ENCODE measurements at regions of chr18 and their contacts with region 1.

Region 1: DNA sequence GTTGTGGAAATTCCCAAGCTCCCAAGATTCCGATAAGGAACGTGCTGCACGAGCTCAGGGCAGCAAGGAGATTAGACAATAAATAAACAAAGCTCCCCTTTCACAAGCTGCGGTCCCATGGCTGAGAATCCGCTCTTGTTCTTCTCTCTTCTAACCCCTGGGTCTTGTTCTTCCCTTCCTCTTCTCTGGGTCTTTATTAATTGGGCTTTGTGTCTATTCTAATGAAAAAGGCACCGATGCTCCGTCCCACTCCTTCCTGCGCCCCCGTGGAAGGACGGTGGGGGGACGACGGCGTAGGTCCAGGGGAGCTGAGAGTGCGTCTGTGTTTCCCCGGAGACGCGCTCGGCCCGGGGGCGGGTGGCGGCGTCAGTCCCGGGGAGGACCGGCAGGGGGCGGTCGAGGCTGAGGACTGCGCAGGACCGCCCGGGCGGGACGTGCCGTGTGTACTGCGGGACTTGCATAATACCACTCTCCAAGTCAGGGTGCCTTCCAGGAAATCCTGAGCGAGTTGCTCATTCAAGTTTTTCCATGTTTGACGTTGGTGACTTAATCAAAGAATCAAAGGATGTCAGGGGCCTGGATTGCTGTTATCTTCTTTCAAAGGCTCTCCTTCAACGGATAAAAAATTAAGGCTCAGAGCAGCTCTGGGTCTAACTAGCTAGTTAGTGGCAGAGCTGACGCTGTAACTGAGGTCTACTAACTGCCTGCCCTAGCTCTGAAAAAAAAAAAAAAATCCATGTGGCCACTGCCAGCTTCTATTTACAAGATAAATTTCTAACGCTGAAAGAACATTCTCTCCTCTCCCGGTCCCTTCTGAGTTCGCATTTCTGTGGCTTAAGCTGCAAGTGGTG is 321.4 kb downstream of the TGIF1 start:
- DNase-seq: peak; percentile 78 to 85
- ATAC-seq: peak; percentile 99

Region 2: DNA sequence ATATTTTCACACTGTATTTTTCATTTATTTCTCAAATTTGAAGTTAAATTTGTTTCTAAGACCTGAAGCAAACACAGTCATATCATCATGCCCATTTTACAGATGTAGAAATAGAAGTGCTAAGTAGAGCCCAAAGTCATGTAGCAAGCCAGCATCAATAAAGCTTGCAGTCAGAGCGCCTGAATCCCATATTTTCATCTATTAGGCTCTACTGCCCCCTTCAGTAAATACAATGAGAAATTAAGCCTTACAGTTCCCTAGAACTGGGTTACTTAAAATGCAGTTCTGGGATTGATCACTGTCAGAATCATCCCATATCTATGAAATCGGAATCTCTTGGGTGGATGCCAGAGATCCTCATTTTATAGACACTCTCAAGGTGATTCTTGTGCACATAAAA is 98.5 kb after region 1 on chr18:
- intact Hi-C with region 1: loop called in 1 of 2 experiments (anchors 10 kb)
- DNase-seq: no peak
- ATAC-seq: peak; percentile 70

Region 3: GRCh38 chr18:3995476-3996102 is 224.2 kb after region 1 on chr18:
- intact Hi-C with region 1: loop called in 1 of 2 experiments (anchors 5 kb)
- DNase-seq: peak in 1 of 2 donors; percentile 62
- ATAC-seq: peak; percentile 60

Measured in left colon (tissue), 2 donors.